A549 (cell line): ENCODE measurements at regions of chr19 and their contacts with region 1.

Region 1: GRCh38 chr19:3125900-3126524 is 9.8 kb upstream of the GNA15 start:
- DNase-seq: peak; percentile 33 to 40
- ATAC-seq: peak; percentile 86 to 92; a peak in 5 of 6 replicates
- H3K4me3 ChIP-seq: no peak overlapping the region
- H3K27ac ChIP-seq: no peak overlapping the region
- H3K4me1 ChIP-seq: no peaks in the 10 kb centered on the region
- CTCF ChIP-seq: peak; percentile 58
- EP300 ChIP-seq: no peak
- POLR2A ChIP-seq: no peak
- RAD21 ChIP-seq: peak; percentile 23 to 28; a peak in 2 of 5 replicates

Region 2: DNA sequence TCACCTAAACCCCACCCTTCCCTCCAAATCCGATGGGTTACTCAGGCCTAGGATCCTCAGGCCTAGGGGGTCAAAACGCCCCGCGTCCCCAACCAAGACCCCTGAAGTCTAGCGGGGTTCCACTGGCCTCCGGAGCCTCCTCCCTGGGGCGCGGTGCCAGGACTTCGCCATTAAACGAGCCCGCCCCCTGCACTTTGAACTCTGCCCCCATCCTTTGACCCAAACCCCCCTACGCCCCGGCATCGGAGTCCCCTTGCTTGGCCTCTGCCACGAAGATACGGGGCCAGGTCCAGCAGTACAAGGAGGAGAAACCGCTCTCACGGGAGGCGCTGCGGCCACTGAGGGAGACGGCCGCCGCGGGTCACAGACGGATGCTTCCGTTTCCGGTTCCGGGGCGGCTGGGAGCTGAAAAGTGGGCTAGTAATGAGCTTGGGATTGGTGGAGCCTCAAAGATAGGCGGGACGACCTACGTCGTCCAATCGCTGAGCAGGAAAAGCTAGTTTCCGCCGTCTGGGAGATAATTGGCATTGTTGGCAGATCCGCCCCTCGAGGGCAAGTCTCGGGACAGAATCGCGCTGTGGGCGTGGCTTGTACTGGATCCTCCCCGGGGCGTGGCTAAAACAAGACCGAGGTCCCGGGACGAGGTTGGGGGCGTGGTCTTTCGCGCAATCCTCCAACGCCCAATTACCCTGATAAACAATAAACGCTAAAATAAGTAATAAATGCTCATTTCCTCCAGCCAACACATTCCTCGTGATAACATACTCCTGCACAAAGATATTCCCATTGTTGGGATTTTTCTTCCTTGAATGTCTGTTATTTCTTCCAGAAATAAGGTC is 175.5 kb before region 1 on chr19:
- CTCF ChIA-PET with region 1: interaction called, 15 read pairs
- POLR2A ChIA-PET with region 1: interaction called, 17 read pairs
- DNase-seq: peak; percentile 98 to 99
- ATAC-seq: peak; percentile 98
- H3K4me3 ChIP-seq: peak overlapping the region; percentile 78
- H3K27ac ChIP-seq: peak overlapping the region; percentile 88 to 95
- H3K4me1 ChIP-seq: peaks cover 6% of the 10 kb centered on the region
- CTCF ChIP-seq: no peak
- EP300 ChIP-seq: no peak
- POLR2A ChIP-seq: peak; percentile 71
- RAD21 ChIP-seq: no peak

Region 3: GRCh38 chr19:3084943-3085342 is 41.1 kb before region 1 on chr19:
- CTCF ChIA-PET with region 1: interaction called, 12 read pairs
- POLR2A ChIA-PET with region 1: no interaction called
- DNase-seq: no peak
- ATAC-seq: no peak
- H3K4me3 ChIP-seq: no peak overlapping the region
- H3K27ac ChIP-seq: no peak overlapping the region
- H3K4me1 ChIP-seq: no peaks in the 10 kb centered on the region
- CTCF ChIP-seq: no peak
- EP300 ChIP-seq: no peak
- POLR2A ChIP-seq: no peak
- RAD21 ChIP-seq: no peak

Region 4: DNA sequence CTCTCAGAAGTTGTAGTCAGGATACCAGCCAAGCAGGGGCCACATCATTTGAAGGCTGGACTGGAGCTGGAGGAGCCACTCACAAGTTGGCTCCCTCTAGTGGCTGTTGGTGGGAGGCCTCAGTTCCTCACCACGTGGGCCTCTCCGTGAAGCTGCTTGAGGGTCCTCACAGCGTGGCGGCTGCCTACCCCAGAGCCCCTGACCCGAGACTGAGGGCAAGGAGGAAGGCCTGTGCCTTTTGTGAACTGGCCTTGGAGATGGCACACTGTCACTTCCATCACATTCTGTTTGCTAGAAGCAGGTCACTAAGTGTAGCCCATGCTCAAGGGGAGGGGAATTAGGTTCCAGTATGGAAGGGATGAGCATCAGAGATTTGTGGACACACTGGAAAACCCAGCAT is 17.2 kb before region 1 on chr19:
- CTCF ChIA-PET with region 1: interaction called, 18 read pairs
- POLR2A ChIA-PET with region 1: no interaction called
- DNase-seq: peak in 1 of 2 experiments; percentile 55
- ATAC-seq: peak; percentile 67 to 77
- H3K4me3 ChIP-seq: no peak overlapping the region
- H3K27ac ChIP-seq: no peak overlapping the region
- H3K4me1 ChIP-seq: 0 out of 3 replicates have a peak, but pooled peaks cover under 1% of the 10 kb centered on the region
- CTCF ChIP-seq: peak; percentile 59
- EP300 ChIP-seq: no peak
- POLR2A ChIP-seq: no peak
- RAD21 ChIP-seq: peak in 1 of 2 experiments; percentile 39; a peak in 3 of 5 replicates

Region 5: DNA sequence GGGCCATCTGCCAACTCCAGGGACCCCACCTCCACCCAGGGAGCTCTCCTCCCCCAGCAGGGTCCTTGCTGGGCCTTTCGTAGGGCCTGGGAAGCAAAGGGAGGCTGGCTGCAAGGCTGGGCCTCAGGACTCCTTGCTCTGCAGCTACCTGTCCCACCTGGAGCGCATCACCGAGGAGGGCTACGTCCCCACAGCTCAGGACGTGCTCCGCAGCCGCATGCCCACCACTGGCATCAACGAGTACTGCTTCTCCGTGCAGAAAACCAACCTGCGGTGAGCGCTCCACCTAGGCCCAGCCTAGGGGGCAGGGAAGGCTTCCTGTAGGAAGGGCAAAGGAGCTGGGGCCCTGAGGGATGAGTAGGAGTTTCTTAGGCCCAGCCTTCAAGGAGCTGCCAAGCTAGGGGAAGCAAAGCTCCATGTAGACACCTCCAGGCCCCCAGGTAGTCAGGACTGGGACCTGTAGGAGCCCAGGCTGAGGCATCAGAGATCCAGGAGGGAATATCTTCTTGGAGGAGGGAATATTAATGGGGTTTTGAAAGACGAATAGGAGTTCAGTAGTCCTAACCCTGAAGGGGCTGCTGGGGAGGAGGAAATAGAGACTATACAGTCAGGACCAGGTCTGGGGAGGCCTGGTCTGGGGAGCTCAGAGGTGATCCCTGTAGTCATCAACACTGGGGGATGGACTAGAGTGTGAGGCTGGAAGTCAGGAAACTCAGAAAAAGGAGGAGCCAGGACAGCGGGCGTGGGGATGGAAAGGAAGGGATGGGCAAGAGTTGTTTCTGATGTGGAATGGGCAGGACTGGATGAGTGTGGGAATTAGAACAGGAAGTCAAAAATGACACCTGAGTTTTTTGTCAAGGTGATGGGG is 25.8 kb after region 1 on chr19:
- CTCF ChIA-PET with region 1: interaction called, 164 read pairs
- POLR2A ChIA-PET with region 1: no interaction called
- DNase-seq: no peak
- ATAC-seq: no peak; a peak in 1 of 6 replicates
- H3K4me3 ChIP-seq: no peak overlapping the region
- H3K27ac ChIP-seq: no peak overlapping the region
- H3K4me1 ChIP-seq: peaks cover 12% of the 10 kb centered on the region
- CTCF ChIP-seq: no peak
- EP300 ChIP-seq: no peak
- POLR2A ChIP-seq: no peak
- RAD21 ChIP-seq: no peak